ENCODE measurements at regions of chr17 and their contacts with region 1.

Region 1: GRCh38 chr17:8288336-8289102 is at the start of gene RANGRF:
- DNase-seq: peak; percentile 77
- ATAC-seq: peak; percentile 93
- H3K4me3 Mint-ChIP-seq: peak within 1 kb of the TSS; percentile 98
- H3K27ac Mint-ChIP-seq: peak within 1 kb of the TSS; percentile 97
- H3K4me1 Mint-ChIP-seq: peaks cover 51% of the 10 kb centered on the region
- H3K27me3 Mint-ChIP-seq: no peaks in the 10 kb centered on the region
- CTCF ChIP-seq: no peak
- total RNA-seq, gene RANGRF: 50.1 and 50.9 TPM in 2 replicates

Region 2: GRCh38 chr17:7844292-7845154 is 444.0 kb before region 1 on chr17:
- CTCF ChIA-PET with region 1: no interaction called
- POLR2A ChIA-PET with region 1: no interaction called
- intact Hi-C with region 1: loop called (anchors 1 kb)
- DNase-seq: peak; percentile 83
- ATAC-seq: peak; percentile 46
- H3K4me3 Mint-ChIP-seq: peak overlapping the region; percentile 98
- H3K27ac Mint-ChIP-seq: peak overlapping the region; percentile 100
- H3K4me1 Mint-ChIP-seq: peaks cover 50% of the 10 kb centered on the region
- H3K27me3 Mint-ChIP-seq: no peaks in the 10 kb centered on the region
- CTCF ChIP-seq: no peak

Region 3: DNA sequence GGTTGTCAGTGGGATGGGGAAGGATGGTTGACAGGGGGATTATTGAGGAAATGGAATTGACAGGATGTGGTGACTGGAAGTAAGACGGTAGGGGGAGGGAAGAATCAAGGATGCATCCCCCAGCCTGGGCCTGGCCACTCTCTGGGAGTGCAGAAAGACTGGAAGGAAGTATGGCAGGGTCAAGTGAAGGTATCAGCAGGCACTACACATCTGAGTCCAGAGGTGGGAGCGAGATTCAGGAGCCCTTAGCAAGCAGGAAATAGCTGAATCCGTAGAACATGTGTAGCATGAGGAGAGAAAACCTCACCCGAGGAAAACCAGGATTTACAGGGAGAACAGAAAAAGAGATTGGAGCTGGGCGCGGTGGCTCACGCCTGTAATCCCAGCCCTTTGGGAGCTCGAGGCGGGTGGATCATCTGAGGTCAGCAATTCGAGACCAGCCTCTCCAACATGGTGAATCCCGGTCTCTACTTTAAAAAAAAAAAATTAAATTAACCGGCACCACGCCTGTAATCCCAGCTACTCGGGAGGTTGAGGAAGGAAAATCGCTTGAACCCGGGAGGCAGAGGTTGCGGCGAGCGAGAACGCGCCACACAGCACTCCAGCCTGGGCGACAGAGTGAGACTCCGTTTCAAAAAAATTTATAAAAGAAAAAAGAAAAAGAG is 104.4 kb before region 1 on chr17:
- CTCF ChIA-PET with region 1: no interaction called
- POLR2A ChIA-PET with region 1: no interaction called
- intact Hi-C with region 1: no loop called
- DNase-seq: no peak
- ATAC-seq: no peak
- H3K4me3 Mint-ChIP-seq: peak overlapping the region; percentile 41
- H3K27ac Mint-ChIP-seq: no peak overlapping the region
- H3K4me1 Mint-ChIP-seq: peaks cover 12% of the 10 kb centered on the region
- H3K27me3 Mint-ChIP-seq: no peaks in the 10 kb centered on the region
- CTCF ChIP-seq: no peak